ENCODE measurements at regions of chr3 and their contacts with region 1.

Region 1: GRCh38 chr3:141441381-141442364 is 45.2 kb upstream of the RASA2 start:
- DNase-seq: peak; percentile 69
- H3K4me3 ChIP-seq: no peak overlapping the region
- H3K27ac ChIP-seq: peak overlapping the region; percentile 71 to 81 (median 80)
- H3K4me1 ChIP-seq: peaks cover 11 to 55% (median 24%) of the 10 kb centered on the region in 4 donors
- H3K27me3 ChIP-seq: no peaks in the 10 kb centered on the region
- CTCF ChIP-seq: peak; percentile 67 to 95 (median 92)
- EP300 ChIP-seq: no peak
- POLR2A ChIP-seq: no peak

Region 2: GRCh38 chr3:141311496-141312353 is 129.9 kb before region 1 on chr3:
- in situ Hi-C with region 1: loop called in 1 of 4 experiments (anchors 5 kb)
- intact Hi-C with region 1: no loop called
- DNase-seq: peak; percentile 100
- H3K4me3 ChIP-seq: peak overlapping the region; percentile 53 to 74 (median 58)
- H3K27ac ChIP-seq: peak overlapping the region; percentile 69 to 89 (median 80)
- H3K4me1 ChIP-seq: peaks cover 6 to 15% (median 10%) of the 10 kb centered on the region in 4 donors
- H3K27me3 ChIP-seq: no peaks in the 10 kb centered on the region
- CTCF ChIP-seq: peak; percentile 55 to 97 (median 77)
- EP300 ChIP-seq: no peak
- POLR2A ChIP-seq: peak; percentile 69

Region 3: GRCh38 chr3:141353652-141354495 is 87.8 kb before region 1 on chr3:
- in situ Hi-C with region 1: loop called in 1 of 4 experiments (anchors 10 kb)
- intact Hi-C with region 1: no loop called
- DNase-seq: no peak
- H3K4me3 ChIP-seq: no peak overlapping the region
- H3K27ac ChIP-seq: no peak overlapping the region
- H3K4me1 ChIP-seq: no peaks in the 10 kb centered on the region
- H3K27me3 ChIP-seq: no peaks in the 10 kb centered on the region
- CTCF ChIP-seq: no peak
- EP300 ChIP-seq: no peak
- POLR2A ChIP-seq: no peak

Region 4: DNA sequence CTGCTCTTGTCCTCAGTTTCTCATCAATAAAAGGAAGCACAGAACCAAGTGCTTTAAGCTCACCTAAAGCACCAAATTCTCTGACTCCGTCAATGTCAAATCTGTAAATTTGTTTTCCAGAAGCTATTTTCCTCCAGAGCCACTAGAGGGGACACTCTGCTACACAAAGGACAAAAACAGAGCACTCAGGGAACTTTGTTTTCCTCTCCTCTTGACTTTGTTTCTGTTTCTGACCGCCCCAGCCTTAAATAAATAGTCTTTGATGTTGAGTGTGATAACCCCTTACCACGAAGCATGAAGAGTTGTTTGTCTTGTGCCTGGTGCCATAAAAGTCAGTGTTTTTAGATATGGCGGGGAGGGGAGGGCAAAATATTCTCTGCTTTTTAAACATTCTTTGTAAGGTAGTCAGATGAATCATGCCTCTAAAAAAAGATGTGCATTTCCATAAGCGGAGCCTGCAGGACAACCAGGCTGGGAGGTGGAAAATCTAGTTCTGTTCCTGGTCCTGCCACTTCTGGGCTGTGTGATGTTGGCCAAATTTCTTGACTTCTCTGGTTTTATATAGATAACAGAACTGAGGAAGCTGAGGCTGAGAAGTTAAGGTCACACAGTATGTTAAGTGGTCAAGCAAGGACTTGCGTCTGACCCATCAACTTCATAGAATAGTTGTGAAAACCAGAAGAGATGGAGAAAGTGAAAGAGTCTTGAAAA is 80.6 kb before region 1 on chr3:
- in situ Hi-C with region 1: loop called in 3 of 4 experiments (anchors 5 to 10 kb)
- intact Hi-C with region 1: no loop called
- DNase-seq: no peak
- H3K4me3 ChIP-seq: peak overlapping the region in 1 of 4 donors; percentile 25
- H3K27ac ChIP-seq: peak overlapping the region; percentile 46 to 71 (median 68)
- H3K4me1 ChIP-seq: peaks cover 3 to 27% (median 12%) of the 10 kb centered on the region in 4 donors
- H3K27me3 ChIP-seq: no peaks in the 10 kb centered on the region
- CTCF ChIP-seq: peak; percentile 64 to 90 (median 72)
- EP300 ChIP-seq: no peak
- POLR2A ChIP-seq: no peak

Region 5: DNA sequence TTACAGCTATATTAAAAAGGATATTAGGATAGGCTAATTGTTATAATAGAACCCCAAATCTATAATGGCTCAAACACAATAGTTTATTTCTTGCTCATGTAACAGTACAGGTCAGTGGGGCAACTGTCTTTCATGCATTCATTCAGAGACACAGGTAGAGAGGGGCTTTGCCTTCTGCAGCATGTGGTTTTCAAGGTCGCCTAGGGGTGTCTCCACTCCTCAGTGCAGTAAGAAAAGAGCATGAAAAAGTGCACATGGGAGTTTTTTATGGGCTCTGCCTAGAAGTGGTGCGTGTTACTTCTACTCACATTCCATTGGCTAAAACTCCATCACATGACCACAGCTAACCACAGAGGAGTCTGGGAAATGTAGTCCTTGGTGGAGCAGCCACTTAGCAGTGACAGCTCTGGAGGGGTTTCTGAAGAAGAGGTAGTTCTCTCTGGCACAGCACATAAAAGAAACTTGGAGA is 71.6 kb before region 1 on chr3:
- in situ Hi-C with region 1: loop called in 1 of 4 experiments (anchors 5 kb)
- intact Hi-C with region 1: no loop called
- DNase-seq: peak; percentile 50
- H3K4me3 ChIP-seq: no peak overlapping the region
- H3K27ac ChIP-seq: peak overlapping the region; percentile 88 to 95 (median 91)
- H3K4me1 ChIP-seq: peaks cover 23 to 51% (median 40%) of the 10 kb centered on the region in 4 donors
- H3K27me3 ChIP-seq: no peaks in the 10 kb centered on the region
- CTCF ChIP-seq: peak in 3 of 5 experiments; percentile 16 to 36 (median 23)
- EP300 ChIP-seq: no peak
- POLR2A ChIP-seq: no peak

Region 6: GRCh38 chr3:141402476-141403171 is 39.0 kb before region 1 on chr3:
- in situ Hi-C with region 1: no loop called
- intact Hi-C with region 1: loop called (anchors 5 kb)
- DNase-seq: peak; percentile 69
- H3K4me3 ChIP-seq: peak overlapping the region; percentile 74 to 94 (median 79)
- H3K27ac ChIP-seq: peak overlapping the region; percentile 96 to 99 (median 97)
- H3K4me1 ChIP-seq: peaks cover 25 to 76% (median 58%) of the 10 kb centered on the region in 4 donors
- H3K27me3 ChIP-seq: no peaks in the 10 kb centered on the region
- CTCF ChIP-seq: peak in 2 of 5 experiments; percentile 31 to 39
- EP300 ChIP-seq: no peak
- POLR2A ChIP-seq: peak; percentile 58